Activated CD4-positive, alpha-beta T cell treated with anti-CD3 and anti-CD28 coated beads for 36 hours (primary cell): ENCODE measurements at regions of chr17 and their contacts with region 1.

Region 1: DNA sequence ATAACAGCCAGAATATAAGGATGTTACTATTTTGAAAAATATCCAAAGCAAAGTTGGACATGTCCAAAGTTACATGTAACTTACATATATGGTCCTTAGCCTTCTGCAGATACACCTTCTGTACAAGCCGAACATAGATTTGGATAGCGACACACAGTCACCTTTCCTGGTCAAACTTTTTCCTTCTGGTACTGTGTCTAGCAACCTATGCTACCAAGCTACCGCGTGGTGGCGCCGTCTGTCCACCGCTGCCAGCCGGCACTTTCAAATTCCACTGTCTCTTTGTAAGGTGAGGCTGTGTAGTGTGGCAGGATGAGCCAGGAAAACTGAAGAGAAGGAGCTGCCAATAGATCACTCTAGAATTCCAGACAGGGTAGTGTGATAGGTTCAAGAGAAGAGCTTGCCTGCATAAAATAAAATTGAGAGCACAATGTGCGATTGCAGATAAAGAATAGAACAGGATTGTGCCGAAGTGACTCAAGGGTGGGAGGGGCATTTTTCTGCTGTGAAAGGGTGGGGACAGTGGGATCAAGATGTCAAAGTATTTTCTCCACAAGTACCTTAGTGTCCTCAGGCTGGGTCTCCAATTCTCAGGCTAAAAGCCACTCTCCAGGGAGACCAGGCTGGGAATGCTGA is 366.9 kb downstream of the SLC39A11 start:
- DNase-seq: peak; percentile 75
- ATAC-seq: peak; percentile 50
- H3K4me3 Mint-ChIP-seq: no peak overlapping the region
- H3K27ac Mint-ChIP-seq: peak overlapping the region; percentile 76
- H3K4me1 Mint-ChIP-seq: peaks cover 36% of the 10 kb centered on the region
- H3K27me3 Mint-ChIP-seq: no peaks in the 10 kb centered on the region

Region 2: DNA sequence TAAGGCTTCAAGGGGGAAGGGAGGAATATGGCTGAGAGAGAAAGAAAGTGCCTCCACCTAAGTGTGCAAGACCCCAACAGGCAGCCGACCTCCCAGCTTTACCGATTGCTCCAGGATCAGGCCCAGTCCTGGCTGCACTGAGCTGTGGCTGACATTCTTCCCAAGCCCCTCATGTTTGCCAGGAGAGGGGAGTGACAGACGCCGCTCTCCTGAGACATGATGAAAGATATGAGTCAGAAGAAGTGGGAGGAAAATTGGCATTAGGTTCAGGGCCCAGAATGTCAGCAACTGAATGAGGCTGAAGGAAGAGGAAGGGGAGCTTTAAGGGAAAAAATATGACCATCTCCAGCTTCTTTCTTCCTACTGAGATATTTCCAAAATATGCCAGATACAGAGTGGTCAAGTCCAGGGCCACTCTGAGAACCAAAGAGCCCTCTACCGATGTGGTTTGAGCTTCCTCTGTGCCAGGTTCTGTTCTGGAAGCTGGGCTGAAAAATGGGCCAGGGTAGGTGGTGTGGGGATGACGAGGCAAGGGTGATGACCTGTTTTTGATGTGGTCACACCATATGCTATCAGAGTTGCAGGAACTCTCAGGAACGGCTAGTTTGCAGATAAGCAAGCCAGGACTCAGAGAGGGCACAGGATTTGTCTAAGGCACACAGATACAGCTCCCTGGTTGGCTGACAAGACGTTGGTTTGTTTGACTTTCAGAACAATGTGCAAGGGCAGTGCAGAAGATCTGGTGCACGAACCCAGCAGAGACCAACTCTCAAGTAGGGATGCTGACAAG is 428.0 kb before region 1 on chr17:
- CTCF ChIA-PET with region 1: no interaction called
- POLR2A ChIA-PET with region 1: no interaction called
- intact Hi-C with region 1: no loop called
- DNase-seq: no peak
- ATAC-seq: no peak
- H3K4me3 Mint-ChIP-seq: no peak overlapping the region
- H3K27ac Mint-ChIP-seq: no peak overlapping the region
- H3K4me1 Mint-ChIP-seq: no peaks in the 10 kb centered on the region
- H3K27me3 Mint-ChIP-seq: no peaks in the 10 kb centered on the region

Region 3: GRCh38 chr17:72812823-72813222 is 87.3 kb after region 1 on chr17:
- CTCF ChIA-PET with region 1: no interaction called
- POLR2A ChIA-PET with region 1: no interaction called
- intact Hi-C with region 1: no loop called
- DNase-seq: no peak
- ATAC-seq: no peak
- H3K4me3 Mint-ChIP-seq: no peak overlapping the region
- H3K27ac Mint-ChIP-seq: no peak overlapping the region
- H3K4me1 Mint-ChIP-seq: no peaks in the 10 kb centered on the region
- H3K27me3 Mint-ChIP-seq: no peaks in the 10 kb centered on the region

Region 4: DNA sequence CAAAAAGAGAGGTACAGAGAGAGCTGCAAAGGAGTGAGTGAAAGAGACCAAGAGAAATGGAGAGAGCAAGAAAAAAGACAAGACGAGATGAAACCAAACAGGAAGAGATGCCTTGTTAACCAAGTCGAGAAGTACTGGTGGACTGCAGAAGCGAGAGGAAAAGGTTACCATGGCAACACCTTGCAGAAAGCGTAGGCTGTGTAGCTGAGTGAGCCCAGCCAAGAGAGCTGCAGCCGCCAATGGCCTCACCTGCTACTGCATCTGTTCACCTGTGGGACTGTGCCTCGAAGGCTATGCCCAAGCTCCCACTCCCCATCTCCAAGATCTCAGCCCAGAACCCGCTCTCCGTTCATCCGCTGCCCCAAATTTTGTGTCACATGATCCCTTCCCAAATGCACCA is 205.6 kb after region 1 on chr17:
- CTCF ChIA-PET with region 1: no interaction called
- POLR2A ChIA-PET with region 1: no interaction called
- intact Hi-C with region 1: no loop called
- DNase-seq: peak; percentile 44
- ATAC-seq: peak; percentile 81
- H3K4me3 Mint-ChIP-seq: no peak overlapping the region
- H3K27ac Mint-ChIP-seq: peak overlapping the region; percentile 2
- H3K4me1 Mint-ChIP-seq: peaks cover 16% of the 10 kb centered on the region
- H3K27me3 Mint-ChIP-seq: no peaks in the 10 kb centered on the region

Region 5: GRCh38 chr17:73092523-73093135 is 367.1 kb after region 1 on chr17 and contains the start of gene SLC39A11:
- CTCF ChIA-PET with region 1: interaction called, 3 read pairs
- POLR2A ChIA-PET with region 1: no interaction called
- intact Hi-C with region 1: loop called in 1 of 2 experiments (anchors 5 kb)
- DNase-seq: peak; percentile 95
- ATAC-seq: peak; percentile 99
- H3K4me3 Mint-ChIP-seq: peak within 1 kb of the TSS; percentile 94
- H3K27ac Mint-ChIP-seq: peak within 1 kb of the TSS; percentile 87
- H3K4me1 Mint-ChIP-seq: peaks cover 24% of the 10 kb centered on the region
- H3K27me3 Mint-ChIP-seq: peaks cover 2% of the 10 kb centered on the region
- total RNA-seq, gene SLC39A11: 12.5 to 17.2 TPM

Region 6: DNA sequence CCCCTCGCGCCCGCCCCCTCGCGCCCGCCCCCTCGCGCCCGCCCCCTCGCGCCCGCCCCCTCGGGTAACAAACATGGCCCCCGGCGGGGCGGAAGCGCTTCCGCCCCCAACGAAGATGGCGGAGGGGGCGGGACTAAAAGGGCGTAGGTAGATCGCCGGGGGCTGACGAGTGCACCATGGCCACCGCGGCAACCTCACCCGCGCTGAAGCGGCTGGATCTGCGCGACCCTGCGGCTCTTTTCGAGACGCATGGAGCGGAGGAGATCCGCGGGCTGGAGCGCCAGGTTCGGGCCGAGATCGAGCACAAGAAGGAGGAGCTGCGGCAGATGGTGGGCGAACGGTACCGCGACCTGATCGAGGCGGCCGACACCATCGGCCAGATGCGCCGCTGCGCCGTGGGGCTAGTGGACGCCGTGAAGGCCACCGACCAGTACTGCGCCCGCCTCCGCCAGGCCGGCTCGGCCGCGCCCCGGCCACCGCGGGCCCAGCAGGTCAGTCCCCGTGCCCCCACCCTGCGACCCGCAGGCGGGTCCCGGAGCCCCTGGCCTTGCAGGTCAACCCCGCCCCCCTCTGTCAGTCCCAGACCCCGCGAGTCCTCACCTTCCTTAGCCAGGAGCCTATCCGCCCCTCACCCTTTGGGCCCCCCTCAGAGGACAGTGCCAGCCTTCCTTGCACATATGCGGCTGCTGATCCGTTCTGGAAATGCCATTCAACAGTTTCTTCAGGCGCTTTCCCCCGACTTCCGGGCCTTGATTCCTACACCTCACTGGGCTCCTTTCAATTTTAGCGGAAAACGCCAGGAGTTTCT is 467.5 kb after region 1 on chr17 and contains the start of gene COG1:
- CTCF ChIA-PET with region 1: interaction called, 44 read pairs
- POLR2A ChIA-PET with region 1: no interaction called
- intact Hi-C with region 1: loop called (anchors 1 kb)
- DNase-seq: peak; percentile 91
- ATAC-seq: peak; percentile 78
- H3K4me3 Mint-ChIP-seq: peak within 1 kb of the TSS; percentile 91
- H3K27ac Mint-ChIP-seq: peak within 1 kb of the TSS; percentile 97
- H3K4me1 Mint-ChIP-seq: peaks cover 18% of the 10 kb centered on the region
- H3K27me3 Mint-ChIP-seq: no peaks in the 10 kb centered on the region
- total RNA-seq, gene COG1: 25.6 to 39.0 TPM

Region 7: GRCh38 chr17:73311781-73312641 is 586.5 kb after region 1 on chr17 and contains the start of gene CDC42EP4:
- CTCF ChIA-PET with region 1: interaction called, 7 read pairs
- POLR2A ChIA-PET with region 1: no interaction called
- intact Hi-C with region 1: loop called in 1 of 2 experiments (anchors 2 kb)
- DNase-seq: peak; percentile 93
- ATAC-seq: peak; percentile 95
- H3K4me3 Mint-ChIP-seq: peak within 1 kb of the TSS; percentile 80
- H3K27ac Mint-ChIP-seq: no peak within 1 kb of the TSS
- H3K4me1 Mint-ChIP-seq: peaks cover 10% of the 10 kb centered on the region
- H3K27me3 Mint-ChIP-seq: peaks cover 2% of the 10 kb centered on the region
- total RNA-seq, gene CDC42EP4: 0.87 to 0.91 TPM

Region 8: GRCh38 chr17:73349138-73349537 is 623.6 kb after region 1 on chr17:
- CTCF ChIA-PET with region 1: no interaction called
- POLR2A ChIA-PET with region 1: no interaction called
- intact Hi-C with region 1: no loop called
- DNase-seq: no peak
- ATAC-seq: no peak
- H3K4me3 Mint-ChIP-seq: no peak overlapping the region
- H3K27ac Mint-ChIP-seq: no peak overlapping the region
- H3K4me1 Mint-ChIP-seq: no peaks in the 10 kb centered on the region
- H3K27me3 Mint-ChIP-seq: no peaks in the 10 kb centered on the region